ENCODE measurements at regions of chrX and their contacts with region 1.

Region 1: GRCh38 chrX:3651276-3651675 is 62.2 kb downstream of the PRKX start:
- DNase-seq: peak; percentile 8
- H3K4me3 ChIP-seq: no peak overlapping the region
- H3K27ac ChIP-seq: no peak overlapping the region
- H3K4me1 ChIP-seq: no peaks in the 10 kb centered on the region
- H3K27me3 ChIP-seq: no peaks in the 10 kb centered on the region
- CTCF ChIP-seq: peak; percentile 32 to 40

Region 2: GRCh38 chrX:3609810-3610209 is 41.5 kb before region 1 on chrX:
- CTCF ChIA-PET with region 1: no interaction called
- dilution Hi-C with region 1: no loop called
- in situ Hi-C with region 1: no loop called
- intact Hi-C with region 1: no loop called
- DNase-seq: peak; percentile 50
- H3K4me3 ChIP-seq: no peak overlapping the region
- H3K27ac ChIP-seq: no peak overlapping the region
- H3K4me1 ChIP-seq: no peaks in the 10 kb centered on the region
- H3K27me3 ChIP-seq: no peaks in the 10 kb centered on the region
- CTCF ChIP-seq: no peak

Region 3: GRCh38 chrX:3713225-3713936 is 62.1 kb after region 1 on chrX and contains the start of gene PRKX:
- CTCF ChIA-PET with region 1: no interaction called
- dilution Hi-C with region 1: no loop called
- in situ Hi-C with region 1: no loop called
- intact Hi-C with region 1: no loop called
- DNase-seq: peak; percentile 58
- H3K4me3 ChIP-seq: peak within 1 kb of the TSS; percentile 72 to 74 (median 74)
- H3K27ac ChIP-seq: peak within 1 kb of the TSS; percentile 51
- H3K4me1 ChIP-seq: no peaks in the 10 kb centered on the region
- H3K27me3 ChIP-seq: no peaks in the 10 kb centered on the region
- CTCF ChIP-seq: no peak
- total RNA-seq, gene PRKX: 33.8 to 39.7 TPM

Region 4: DNA sequence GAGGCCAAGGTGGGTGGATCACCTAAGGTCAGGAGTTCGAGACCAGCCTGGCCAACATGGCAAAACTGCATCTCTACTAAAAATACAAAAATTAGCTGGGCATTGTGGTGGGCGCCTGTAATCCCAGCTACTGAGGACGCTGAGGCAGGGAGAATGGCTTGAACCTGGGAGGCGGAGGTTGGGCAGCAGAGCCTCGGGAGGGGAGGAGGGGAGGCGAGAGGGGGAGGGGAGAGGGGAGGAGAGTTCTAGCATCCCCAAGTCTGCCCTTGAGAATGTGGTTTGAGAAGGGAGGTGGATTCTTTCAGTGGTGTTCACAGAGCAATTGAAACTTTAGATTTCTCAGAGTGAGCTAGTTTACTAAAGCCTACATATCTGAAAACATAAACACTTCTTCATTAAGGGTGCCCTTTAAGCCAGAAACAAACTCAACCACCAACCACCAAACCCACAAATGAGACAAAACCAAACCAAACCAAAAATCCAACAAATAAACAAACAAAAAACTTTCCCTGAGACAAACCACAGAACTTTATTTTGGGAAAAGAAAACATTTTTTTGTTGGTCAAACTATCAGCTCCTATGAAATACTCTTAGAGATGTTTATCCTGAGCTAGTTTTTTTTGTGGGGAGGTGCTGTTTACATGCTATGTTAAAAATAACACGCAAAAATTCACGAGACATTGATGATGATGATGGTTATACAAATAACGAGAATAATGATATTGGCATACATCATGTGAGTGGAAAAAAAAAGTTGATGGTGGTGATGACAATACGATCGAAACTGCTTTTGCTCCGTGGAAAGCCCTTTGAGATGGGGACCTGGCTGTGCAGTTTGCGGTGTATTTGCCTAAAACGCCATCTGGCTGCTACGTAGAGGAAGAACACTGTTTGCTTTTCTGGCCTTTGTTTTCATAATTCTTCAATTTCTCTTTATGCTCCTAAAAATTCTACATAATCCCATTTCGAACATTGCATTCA is 160.3 kb after region 1 on chrX:
- CTCF ChIA-PET with region 1: no interaction called
- dilution Hi-C with region 1: no loop called
- in situ Hi-C with region 1: no loop called
- intact Hi-C with region 1: loop called (anchors 1 kb)
- DNase-seq: peak; percentile 25
- H3K4me3 ChIP-seq: no peak overlapping the region
- H3K27ac ChIP-seq: no peak overlapping the region
- H3K4me1 ChIP-seq: peaks cover 6% of the 10 kb centered on the region
- H3K27me3 ChIP-seq: no peaks in the 10 kb centered on the region
- CTCF ChIP-seq: peak; percentile 28 to 68